ENCODE measurements at regions of chr1 and their contacts with region 1.

Region 1: DNA sequence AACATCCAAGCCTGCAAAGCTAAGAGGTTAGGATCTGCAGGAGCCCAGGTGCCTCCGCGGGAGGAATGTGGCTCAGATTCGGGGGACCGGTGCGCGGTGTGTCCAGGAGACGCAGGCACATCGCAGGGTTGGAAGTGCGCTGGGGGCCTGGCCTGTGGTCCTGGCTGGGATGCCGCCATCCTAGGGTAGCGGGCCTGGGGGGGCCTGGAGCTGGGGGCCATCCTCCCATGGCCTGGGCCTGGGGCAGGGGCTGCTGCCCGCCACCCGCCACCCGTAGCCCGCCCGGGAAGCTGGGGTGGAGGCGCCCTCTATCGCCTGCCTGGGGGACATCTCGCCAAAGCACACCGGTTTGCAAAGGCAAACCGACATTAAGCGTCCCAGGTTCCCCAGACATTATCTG is 170.6 kb upstream of the ARHGEF16 start:
- DNase-seq: no peak
- H3K4me3 ChIP-seq: no peak overlapping the region
- H3K27ac ChIP-seq: no peak overlapping the region
- H3K4me1 ChIP-seq: peaks cover 0 to 7% (median 3%) of the 10 kb centered on the region in 4 donors
- H3K27me3 ChIP-seq: peaks cover 9 to 72% (median 43%) of the 10 kb centered on the region in 3 donors
- CTCF ChIP-seq: peak; percentile 31 to 77 (median 67)
- EP300 ChIP-seq: no peak
- POLR2A ChIP-seq: no peak

Region 2: DNA sequence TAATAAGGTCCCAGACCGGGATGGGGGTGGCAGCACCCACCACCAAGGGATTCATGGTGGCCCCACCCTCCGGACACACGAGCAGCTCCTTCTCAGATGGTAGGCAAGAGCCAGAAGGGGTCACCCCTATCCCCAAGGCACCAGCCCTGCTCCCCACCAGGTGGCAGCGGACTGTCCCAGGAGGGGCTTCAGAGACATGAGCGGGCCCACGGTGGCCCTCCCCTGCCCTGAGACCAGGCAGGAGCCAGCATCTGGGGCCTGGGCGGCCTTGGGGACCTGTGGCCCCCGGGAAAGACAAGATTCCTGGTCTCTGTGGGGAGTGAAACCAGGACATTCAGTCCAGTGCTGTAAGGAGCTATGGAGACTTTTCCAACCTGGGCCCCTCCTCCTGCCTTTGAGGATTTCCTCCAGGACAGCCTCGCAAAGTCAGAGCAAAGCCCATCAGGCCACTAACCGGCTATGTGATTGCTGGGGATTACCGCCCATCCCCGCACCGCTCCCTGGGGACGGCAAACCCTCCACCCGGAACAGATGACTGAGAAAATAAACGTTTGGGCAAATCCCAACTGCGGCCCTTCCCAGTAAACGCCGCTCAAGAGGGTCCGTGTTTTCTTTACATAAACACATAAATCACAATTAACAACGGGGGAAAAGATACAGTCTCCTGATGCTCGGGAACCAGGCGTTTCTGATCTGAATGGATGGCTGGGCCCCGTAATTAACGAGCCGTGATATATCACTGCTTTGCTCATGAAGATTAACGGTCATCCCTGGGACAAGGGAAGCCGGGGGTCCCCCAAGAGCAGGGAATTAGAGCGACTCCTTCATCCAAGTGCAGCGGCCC is 119.8 kb after region 1 on chr1:
- intact Hi-C with region 1: loop called (anchors 10 kb)
- DNase-seq: no peak
- H3K4me3 ChIP-seq: no peak overlapping the region
- H3K27ac ChIP-seq: no peak overlapping the region
- H3K4me1 ChIP-seq: peaks cover 0 to 19% (median 10%) of the 10 kb centered on the region in 4 donors
- H3K27me3 ChIP-seq: peaks cover 16 to 97% (median 73%) of the 10 kb centered on the region in 3 donors
- CTCF ChIP-seq: no peak
- EP300 ChIP-seq: no peak
- POLR2A ChIP-seq: no peak

Measured in sigmoid colon (tissue), 7 donors.